ENCODE measurements at regions of chr1 and their contacts with region 1.

Region 1: GRCh38 chr1:8560611-8561544 is 243.0 kb downstream of the SLC45A1 start:
- DNase-seq: no peak
- ATAC-seq: peak; percentile 80
- H3K4me3 ChIP-seq: no peak overlapping the region
- H3K27ac ChIP-seq: no peak overlapping the region
- H3K4me1 ChIP-seq: peaks cover 46% of the 10 kb centered on the region
- H3K27me3 ChIP-seq: no peaks in the 10 kb centered on the region
- CTCF ChIP-seq: peak; percentile 82; the same call in 1 of the 2 replicates

Region 2: GRCh38 chr1:8671306-8671917 is 110.5 kb after region 1 on chr1:
- CTCF ChIA-PET with region 1: interaction called, 4 read pairs
- POLR2A ChIA-PET with region 1: no interaction called
- in situ Hi-C with region 1: no loop called
- intact Hi-C with region 1: loop called (anchors 2 kb)
- DNase-seq: peak; percentile 38
- ATAC-seq: no peak
- H3K4me3 ChIP-seq: no peak overlapping the region
- H3K27ac ChIP-seq: 0 out of 2 replicates have a peak overlapping the region, but pooled peaks have one; percentile 21
- H3K4me1 ChIP-seq: peaks cover 79% of the 10 kb centered on the region
- H3K27me3 ChIP-seq: no peaks in the 10 kb centered on the region
- CTCF ChIP-seq: peak; percentile 85

Measured in Panc1 (cell line).